Activated CD4-positive, alpha-beta memory T cell treated with anti-CD3 and anti-CD28 coated beads for 36 hours (primary cell): ENCODE measurements at regions of chr14 and their contacts with region 1.

Region 1: DNA sequence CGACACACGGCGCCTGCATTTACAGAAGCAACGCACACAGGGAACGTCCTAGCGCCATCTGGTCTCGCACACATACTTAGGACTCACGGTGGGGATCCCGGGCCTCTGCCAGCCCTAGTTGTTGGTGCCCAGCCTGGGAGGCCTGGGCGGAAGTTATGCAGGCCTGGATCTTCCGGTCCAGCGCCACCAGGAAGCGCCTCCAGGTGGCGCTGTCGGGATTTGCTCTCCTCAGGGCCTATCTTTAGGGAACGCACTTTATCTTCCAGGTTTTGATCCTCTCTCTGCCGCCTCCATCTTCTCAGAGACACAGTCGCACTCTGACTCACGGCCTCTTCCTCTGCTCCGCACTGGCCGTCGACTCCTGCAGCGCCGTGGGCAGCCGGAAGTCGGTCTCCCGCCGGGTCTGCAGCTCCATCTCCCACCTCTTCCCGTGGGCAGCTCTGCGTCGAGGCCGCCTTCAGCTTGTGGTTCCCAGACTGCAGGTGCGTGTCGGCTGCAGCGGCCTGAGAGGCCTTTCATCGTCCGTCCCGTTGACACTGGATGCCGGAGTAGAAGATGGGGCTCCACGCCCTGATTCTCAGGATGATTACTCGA is 760.4 kb downstream of the TMEM121 start:
- DNase-seq: peak; percentile 43
- H3K4me3 Mint-ChIP-seq: no peak overlapping the region
- H3K27ac Mint-ChIP-seq: no peak overlapping the region
- H3K4me1 Mint-ChIP-seq: no peaks in the 10 kb centered on the region
- H3K27me3 Mint-ChIP-seq: peaks cover 18% of the 10 kb centered on the region

Region 2: GRCh38 chr14:106372870-106373652 is 86.3 kb after region 1 on chr14:
- CTCF ChIA-PET with region 1: interaction called, 11 read pairs
- POLR2A ChIA-PET with region 1: no interaction called
- intact Hi-C with region 1: no loop called
- DNase-seq: peak; percentile 90
- H3K4me3 Mint-ChIP-seq: peak overlapping the region; percentile 56
- H3K27ac Mint-ChIP-seq: peak overlapping the region; percentile 21
- H3K4me1 Mint-ChIP-seq: peaks cover 21% of the 10 kb centered on the region
- H3K27me3 Mint-ChIP-seq: peaks cover 12% of the 10 kb centered on the region